ENCODE measurements at regions of chr4 and their contacts with region 1.

Region 1: DNA sequence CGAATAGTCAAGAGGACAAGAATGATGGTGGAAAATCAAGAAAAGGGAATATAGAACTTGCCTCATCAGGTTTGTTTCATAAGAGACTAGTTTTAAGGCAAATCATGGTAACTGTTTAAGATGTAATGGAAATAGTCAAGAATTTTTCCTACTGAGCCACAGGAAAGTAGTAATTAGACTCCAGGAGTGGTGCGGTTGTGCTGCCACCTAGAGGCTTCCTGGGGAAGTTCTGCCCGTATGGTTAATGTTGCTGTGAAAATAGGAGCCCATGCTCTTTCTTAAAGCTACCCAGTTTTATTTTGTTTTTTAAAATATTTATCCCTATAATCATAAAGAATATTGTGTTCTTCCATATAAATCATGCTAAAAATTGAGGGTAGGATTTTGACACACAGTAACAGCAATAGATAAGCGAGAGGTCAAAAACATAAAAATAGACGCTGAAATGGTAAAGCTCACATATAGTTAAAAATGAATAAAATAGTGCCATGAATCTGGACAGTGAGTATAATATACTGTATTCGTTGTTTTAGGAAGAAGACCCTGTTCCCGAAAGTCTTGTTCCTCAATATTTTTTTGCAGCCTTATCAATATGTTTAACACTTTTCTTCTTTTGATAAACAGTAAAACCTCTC is 87.0 kb downstream of the PHOX2B start:
- H3K4me3 Mint-ChIP-seq: no peak overlapping the region
- H3K27ac Mint-ChIP-seq: no peak overlapping the region
- H3K4me1 Mint-ChIP-seq: no peaks in the 10 kb centered on the region
- H3K27me3 Mint-ChIP-seq: peaks cover 18% of the 10 kb centered on the region

Region 2: GRCh38 chr4:39823191-39823590 is 1838.4 kb before region 1 on chr4:
- intact Hi-C with region 1: no loop called
- H3K4me3 Mint-ChIP-seq: no peak overlapping the region
- H3K27ac Mint-ChIP-seq: no peak overlapping the region
- H3K4me1 Mint-ChIP-seq: no peaks in the 10 kb centered on the region
- H3K27me3 Mint-ChIP-seq: no peaks in the 10 kb centered on the region

Region 3: DNA sequence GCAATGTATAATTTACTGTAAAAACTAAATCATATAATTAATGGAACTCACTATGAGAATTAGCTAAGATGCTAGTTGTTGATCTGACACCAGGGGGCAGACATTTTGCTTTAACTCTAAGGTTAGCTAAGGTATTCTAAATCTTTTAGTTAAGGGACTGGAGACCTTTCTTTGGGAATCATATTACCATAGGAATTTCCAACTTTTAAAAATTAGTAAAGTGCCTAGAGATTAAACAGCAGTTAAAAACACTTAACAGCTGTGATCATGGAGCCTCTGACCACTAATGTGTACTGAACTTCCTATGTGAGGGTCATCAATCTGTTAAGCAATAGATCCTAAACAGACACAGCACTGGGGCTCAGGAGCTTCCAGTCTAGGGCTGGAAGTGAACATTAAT is 685.2 kb before region 1 on chr4:
- intact Hi-C with region 1: loop called (anchors 10 kb)
- H3K4me3 Mint-ChIP-seq: no peak overlapping the region
- H3K27ac Mint-ChIP-seq: no peak overlapping the region
- H3K4me1 Mint-ChIP-seq: no peaks in the 10 kb centered on the region
- H3K27me3 Mint-ChIP-seq: no peaks in the 10 kb centered on the region

Region 4: GRCh38 chr4:41600243-41600912 is 61.2 kb before region 1 on chr4:
- intact Hi-C with region 1: no loop called
- H3K4me3 Mint-ChIP-seq: no peak overlapping the region
- H3K27ac Mint-ChIP-seq: no peak overlapping the region
- H3K4me1 Mint-ChIP-seq: peaks cover 5% of the 10 kb centered on the region
- H3K27me3 Mint-ChIP-seq: no peaks in the 10 kb centered on the region